Naive thymus-derived CD4-positive, alpha-beta T cell (primary cell): ENCODE measurements at regions of chr18 and their contacts with region 1.

Region 1: GRCh38 chr18:12391618-12392165 is 14.7 kb upstream of the AFG3L2 start:
- DNase-seq: peak in 8 of 9 donors; percentile 16 to 59 (median 44)
- ATAC-seq: peak; percentile 96
- H3K4me3 ChIP-seq: no peak overlapping the region
- H3K4me3 Mint-ChIP-seq: no peak overlapping the region
- H3K27ac ChIP-seq: no peak overlapping the region
- H3K27ac Mint-ChIP-seq: no peak overlapping the region
- H3K4me1 ChIP-seq: no peaks in the 10 kb centered on the region
- H3K4me1 Mint-ChIP-seq: peaks cover 0 to 3% (median 0%) of the 10 kb centered on the region in 7 donors
- H3K27me3 ChIP-seq: no peaks in the 10 kb centered on the region
- H3K27me3 Mint-ChIP-seq: peaks cover 0 to 9% (median 5%) of the 10 kb centered on the region in 5 donors

Region 2: GRCh38 chr18:12702221-12703095 is 310.8 kb after region 1 on chr18 and contains the starts of genes CEP76 and PSMG2:
- CTCF ChIA-PET with region 1: no interaction called
- POLR2A ChIA-PET with region 1: no interaction called
- intact Hi-C with region 1: loop called in 1 of 2 experiments (anchors 5 kb)
- DNase-seq: peak; percentile 77 to 88 (median 84)
- ATAC-seq: peak; percentile 89
- H3K4me3 ChIP-seq: peak within 1 kb of the TSS; percentile 97
- H3K4me3 Mint-ChIP-seq: peak within 1 kb of the TSS; percentile 92 to 99 (median 98)
- H3K27ac ChIP-seq: peak within 1 kb of the TSS; percentile 96
- H3K27ac Mint-ChIP-seq: peak within 1 kb of the TSS; percentile 91 to 100 (median 96)
- H3K4me1 ChIP-seq: peaks cover 17 to 20% of the 10 kb centered on the region in 2 donors
- H3K4me1 Mint-ChIP-seq: peaks cover 36 to 63% (median 50%) of the 10 kb centered on the region in 7 donors
- H3K27me3 ChIP-seq: no peaks in the 10 kb centered on the region
- H3K27me3 Mint-ChIP-seq: no peaks in the 10 kb centered on the region
- total RNA-seq, gene CEP76: 6.9 to 13.2 (median 11.1) TPM
- total RNA-seq, gene PSMG2: 49.9 to 104 (median 59.9) TPM

Region 3: GRCh38 chr18:12890506-12890905 is 498.8 kb after region 1 on chr18:
- CTCF ChIA-PET with region 1: no interaction called
- POLR2A ChIA-PET with region 1: no interaction called
- intact Hi-C with region 1: loop called in 1 of 2 experiments (anchors 1 kb)
- DNase-seq: no peak
- ATAC-seq: no peak
- H3K4me3 ChIP-seq: no peak overlapping the region
- H3K4me3 Mint-ChIP-seq: no peak overlapping the region
- H3K27ac ChIP-seq: no peak overlapping the region
- H3K27ac Mint-ChIP-seq: no peak overlapping the region
- H3K4me1 ChIP-seq: no peaks in the 10 kb centered on the region
- H3K4me1 Mint-ChIP-seq: peaks cover 0 to 27% (median 13%) of the 10 kb centered on the region in 7 donors
- H3K27me3 ChIP-seq: peaks cover 0 to under 1% of the 10 kb centered on the region in 2 donors
- H3K27me3 Mint-ChIP-seq: peaks cover 7 to 16% (median 12%) of the 10 kb centered on the region in 5 donors